GM13977 (cell line): ENCODE measurements at regions of chr7 and their contacts with region 1.

Region 1: GRCh38 chr7:45136106-45137060 is 21.2 kb upstream of the RAMP3 start:
- DNase-seq: peak; percentile 88
- CTCF ChIP-seq: peak; percentile 93

Region 2: GRCh38 chr7:44581879-44582603 is 554.3 kb before region 1 on chr7 and contains the start of gene TMED4:
- in situ Hi-C with region 1: loop called (anchors 25 kb)
- DNase-seq: peak; percentile 100
- CTCF ChIP-seq: no peak

Region 3: DNA sequence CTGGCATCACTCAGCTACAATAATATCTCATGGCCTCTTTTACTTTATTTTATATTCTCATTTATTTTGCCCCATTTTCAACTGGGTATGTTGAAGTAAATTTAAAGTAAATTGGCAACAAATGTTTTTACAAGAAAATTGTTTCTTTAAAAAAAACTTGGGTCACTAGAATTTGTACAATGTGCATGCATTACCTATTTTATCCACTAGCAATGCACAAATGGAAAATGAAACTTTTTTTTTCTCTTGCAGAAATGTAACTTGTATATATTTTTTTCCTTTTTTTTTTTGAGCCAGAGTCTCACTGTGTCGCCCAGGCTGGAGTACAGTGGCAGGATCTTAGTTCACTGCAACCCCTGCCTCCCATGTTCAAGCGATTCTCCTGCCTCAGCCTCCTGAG is 278.2 kb before region 1 on chr7:
- in situ Hi-C with region 1: loop called (anchors 10 kb)
- DNase-seq: no peak
- CTCF ChIP-seq: peak; percentile 2

Region 4: GRCh38 chr7:45035893-45036292 is 100.5 kb before region 1 on chr7:
- in situ Hi-C with region 1: no loop called
- DNase-seq: no peak
- CTCF ChIP-seq: no peak

Region 5: DNA sequence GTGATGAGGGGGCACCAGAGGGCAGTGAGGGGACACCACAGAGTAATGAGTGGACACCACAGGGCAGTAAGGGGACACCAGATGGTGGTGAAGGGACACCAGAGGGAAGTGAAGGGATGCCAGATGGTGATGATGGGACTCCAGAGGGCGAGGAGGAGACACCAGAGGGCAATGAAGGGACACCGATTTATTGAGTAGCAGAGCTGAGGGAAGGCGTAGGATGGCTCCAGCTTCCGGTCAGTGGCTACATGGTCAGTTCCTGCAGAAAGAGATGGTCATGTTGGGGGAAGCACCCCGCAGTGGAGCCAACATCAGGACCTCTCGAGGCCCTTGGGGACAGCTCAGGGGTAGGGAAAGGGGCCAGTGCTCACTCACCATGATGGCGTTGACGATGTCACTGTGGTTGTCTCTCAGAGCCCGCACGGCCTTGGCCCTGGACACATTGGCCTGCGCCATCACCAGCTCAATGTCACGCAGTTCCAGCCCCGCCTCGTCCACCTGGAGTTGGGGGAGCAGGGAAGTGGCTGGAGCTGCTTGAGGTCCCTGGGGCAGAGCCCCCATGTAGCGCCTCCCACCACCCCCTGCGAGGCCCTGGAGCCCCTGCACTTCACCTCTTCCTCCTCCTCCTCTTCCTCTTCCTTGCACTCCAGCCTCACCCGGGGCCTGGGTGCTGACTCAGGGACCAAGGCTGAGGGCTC is 56.0 kb before region 1 on chr7:
- in situ Hi-C with region 1: no loop called
- DNase-seq: no peak
- CTCF ChIP-seq: no peak

Region 6: DNA sequence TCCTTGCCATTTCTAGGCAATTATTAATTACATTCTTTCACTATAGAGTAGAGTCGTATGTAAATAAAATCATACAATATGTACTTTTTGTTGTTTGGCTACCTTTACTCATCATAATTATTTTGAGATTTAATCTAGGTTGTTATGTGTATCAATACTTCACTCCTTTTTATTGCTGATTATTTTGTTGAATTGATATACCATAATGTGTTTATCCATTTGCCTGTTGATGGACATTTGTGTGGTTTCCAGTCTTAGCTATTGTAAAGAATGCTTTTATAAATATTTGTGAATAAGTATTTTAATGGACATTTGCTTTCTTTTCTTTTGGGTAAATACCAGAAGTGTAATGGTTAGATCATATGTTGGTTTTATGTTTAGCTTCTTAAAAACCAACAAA is 195.2 kb after region 1 on chr7:
- in situ Hi-C with region 1: no loop called
- DNase-seq: no peak
- CTCF ChIP-seq: no peak